ENCODE measurements at regions of chr16 and their contacts with region 1.

Region 1: GRCh38 chr16:68528686-68529379 is 10.3 kb upstream of the ZFP90 start:
- DNase-seq: peak; percentile 39
- ATAC-seq: peak; percentile 90
- H3K4me3 ChIP-seq: no peak overlapping the region
- H3K27ac ChIP-seq: no peak overlapping the region
- H3K4me1 ChIP-seq: peaks cover 7% of the 10 kb centered on the region
- H3K27me3 ChIP-seq: no peaks in the 10 kb centered on the region
- CTCF ChIP-seq: peak; percentile 95 to 98 (median 96); a peak in 5 of 6 replicates
- EP300 ChIP-seq: no peak
- POLR2A ChIP-seq: no peak
- RAD21 ChIP-seq: peak; percentile 96

Region 2: GRCh38 chr16:68448360-68448970 is 80.4 kb before region 1 on chr16 and contains the start of gene SMPD3:
- CTCF ChIA-PET with region 1: interaction called, 10 read pairs
- POLR2A ChIA-PET with region 1: interaction called, 3 read pairs
- RAD21 ChIA-PET with region 1: no interaction called
- SMC1A ChIA-PET with region 1: no interaction called
- in situ Hi-C with region 1: no loop called
- intact Hi-C with region 1: no loop called
- DNase-seq: peak; percentile 86
- ATAC-seq: peak; percentile 97
- H3K4me3 ChIP-seq: peak within 1 kb of the TSS; percentile 52
- H3K27ac ChIP-seq: no peak within 1 kb of the TSS
- H3K4me1 ChIP-seq: no peaks in the 10 kb centered on the region
- H3K27me3 ChIP-seq: 0 out of 4 replicates have a peak, but pooled peaks cover 0 to 2% of the 10 kb centered on the region in 2 experiments
- CTCF ChIP-seq: no peak
- EP300 ChIP-seq: no peak
- POLR2A ChIP-seq: no peak
- RAD21 ChIP-seq: no peak
- polyA plus RNA-seq, gene SMPD3: 0.06 to 0.22 TPM

Region 3: DNA sequence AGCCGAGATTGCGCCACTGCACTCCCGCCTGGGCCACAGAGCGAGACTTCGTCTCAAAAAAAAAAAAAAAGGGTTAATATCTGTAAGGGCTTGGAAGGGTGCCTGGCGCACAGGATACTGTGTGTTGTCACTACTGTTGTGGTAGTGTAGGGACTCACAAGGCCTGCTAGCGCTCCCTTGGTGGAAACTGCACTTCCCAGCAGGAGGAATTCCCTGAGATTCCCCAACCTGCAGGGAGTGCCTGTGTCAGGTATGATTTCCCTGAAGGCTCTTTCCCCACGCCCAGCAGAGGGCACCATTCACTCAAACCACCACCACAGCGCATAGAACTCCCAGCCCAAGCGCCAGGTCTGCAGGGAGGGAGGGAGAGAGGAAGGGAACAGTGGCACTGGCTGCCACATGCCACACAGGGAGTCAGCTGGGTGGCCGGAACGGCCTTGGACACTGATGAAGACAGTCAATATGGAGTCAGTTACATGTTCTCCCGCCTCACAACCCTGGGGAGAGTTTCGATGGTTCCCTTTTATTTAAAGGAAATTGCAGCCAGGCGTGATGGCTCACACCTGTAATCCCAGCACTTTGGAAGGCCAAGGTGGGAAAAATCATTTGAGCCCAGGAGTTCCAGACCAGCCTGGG is 175.5 kb after region 1 on chr16:
- CTCF ChIA-PET with region 1: interaction called, 6 read pairs
- POLR2A ChIA-PET with region 1: no interaction called
- RAD21 ChIA-PET with region 1: no interaction called
- SMC1A ChIA-PET with region 1: interaction called, 3 read pairs
- in situ Hi-C with region 1: no loop called
- intact Hi-C with region 1: loop called (anchors 1 kb)
- DNase-seq: no peak
- ATAC-seq: peak; percentile 93
- H3K4me3 ChIP-seq: no peak overlapping the region
- H3K27ac ChIP-seq: no peak overlapping the region
- H3K4me1 ChIP-seq: peaks cover 3% of the 10 kb centered on the region; the same call in 1 of the 2 replicates
- H3K27me3 ChIP-seq: no peaks in the 10 kb centered on the region
- CTCF ChIP-seq: peak; percentile 82 to 89 (median 87)
- EP300 ChIP-seq: no peak
- POLR2A ChIP-seq: no peak
- RAD21 ChIP-seq: peak; percentile 98

Region 4: DNA sequence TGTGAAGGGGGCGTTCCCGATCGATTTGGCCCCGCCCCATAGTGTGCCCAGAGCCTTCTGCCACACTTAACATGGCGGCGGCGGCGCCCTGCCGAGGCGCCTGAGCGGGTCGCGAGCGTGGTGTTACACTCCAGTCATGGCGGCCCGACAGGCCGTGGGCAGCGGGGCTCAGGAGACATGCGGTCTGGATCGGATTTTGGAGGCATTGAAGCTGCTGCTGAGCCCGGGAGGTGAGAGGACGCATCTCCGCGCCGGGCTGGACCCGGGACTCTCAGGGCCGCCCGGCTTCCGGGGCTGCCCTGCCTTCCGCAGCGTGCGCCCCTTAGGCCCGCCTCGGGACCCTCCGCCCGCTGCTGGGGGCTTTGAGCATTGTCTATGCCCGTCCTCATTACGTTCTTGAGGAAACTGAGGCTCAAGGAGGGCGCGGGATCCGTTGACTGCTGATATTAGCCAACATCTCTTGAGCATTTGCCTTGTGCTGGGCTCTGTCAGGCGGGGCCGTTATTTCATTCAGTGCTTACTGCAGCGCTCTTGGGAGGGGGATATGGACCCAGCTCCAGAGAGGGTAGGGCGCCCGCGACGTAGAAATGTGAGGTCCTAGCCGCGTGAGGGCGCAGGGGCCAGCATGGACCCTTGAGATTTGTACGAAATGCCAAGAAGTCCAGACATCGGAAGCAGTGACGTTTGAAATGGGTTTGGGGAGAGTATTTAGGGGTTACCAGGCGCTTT is 314.8 kb after region 1 on chr16 and contains the start of gene TANGO6:
- CTCF ChIA-PET with region 1: interaction called, 11 read pairs
- POLR2A ChIA-PET with region 1: no interaction called
- RAD21 ChIA-PET with region 1: interaction called, 5 read pairs
- SMC1A ChIA-PET with region 1: interaction called, 3 read pairs
- in situ Hi-C with region 1: no loop called
- intact Hi-C with region 1: loop called (anchors 5 kb)
- DNase-seq: peak; percentile 41
- ATAC-seq: peak; percentile 95
- H3K4me3 ChIP-seq: peak within 1 kb of the TSS; percentile 88
- H3K27ac ChIP-seq: peak within 1 kb of the TSS; percentile 91
- H3K4me1 ChIP-seq: peaks cover 9% of the 10 kb centered on the region
- H3K27me3 ChIP-seq: no peaks in the 10 kb centered on the region
- CTCF ChIP-seq: peak; percentile 36 to 43 (median 38); a peak in 4 of 6 replicates
- EP300 ChIP-seq: no peak
- POLR2A ChIP-seq: peak; percentile 97
- RAD21 ChIP-seq: no peak
- polyA plus RNA-seq, gene TANGO6: 1.1 to 2.0 TPM

Region 5: GRCh38 chr16:68902008-68902968 is 373.5 kb after region 1 on chr16:
- CTCF ChIA-PET with region 1: interaction called, 5 read pairs
- POLR2A ChIA-PET with region 1: no interaction called
- RAD21 ChIA-PET with region 1: no interaction called
- SMC1A ChIA-PET with region 1: interaction called, 4 read pairs
- in situ Hi-C with region 1: no loop called
- intact Hi-C with region 1: loop called (anchors 5 kb)
- DNase-seq: no peak
- ATAC-seq: peak; percentile 68
- H3K4me3 ChIP-seq: no peak overlapping the region
- H3K27ac ChIP-seq: no peak overlapping the region
- H3K4me1 ChIP-seq: no peaks in the 10 kb centered on the region
- H3K27me3 ChIP-seq: no peaks in the 10 kb centered on the region
- CTCF ChIP-seq: peak; percentile 54 to 61 (median 54); a peak in 5 of 6 replicates
- EP300 ChIP-seq: no peak
- POLR2A ChIP-seq: no peak
- RAD21 ChIP-seq: peak; percentile 79